ENCODE measurements at regions of chr2 and their contacts with region 1.

Region 1: GRCh38 chr2:70115646-70116442 is 28.6 kb downstream of the PCBP1 start:
- DNase-seq: no peak
- ATAC-seq: peak; percentile 78
- H3K4me3 ChIP-seq: peak overlapping the region; percentile 30; the same call in 1 of the 2 replicates
- H3K27ac ChIP-seq: peak overlapping the region; percentile 88
- H3K4me1 ChIP-seq: peaks cover 51% of the 10 kb centered on the region
- H3K27me3 ChIP-seq: no peaks in the 10 kb centered on the region
- CTCF ChIP-seq: peak in 1 of 3 experiments; percentile 27; a peak in 2 of 6 replicates
- EP300 ChIP-seq: 0 out of 4 replicates have a peak, but pooled peaks of 1 of the 2 experiments have one; percentile 34
- POLR2A ChIP-seq: no peak
- RAD21 ChIP-seq: no peak

Region 2: GRCh38 chr2:70094978-70095719 is 20.7 kb before region 1 on chr2:
- CTCF ChIA-PET with region 1: interaction called, 25 read pairs
- POLR2A ChIA-PET with region 1: interaction called, 187 read pairs
- RAD21 ChIA-PET with region 1: interaction called, 31 read pairs
- SMC1A ChIA-PET with region 1: interaction called, 28 read pairs
- in situ Hi-C with region 1: no loop called
- intact Hi-C with region 1: no loop called
- DNase-seq: no peak
- ATAC-seq: peak; percentile 90
- H3K4me3 ChIP-seq: 0 out of 2 replicates have a peak overlapping the region, but pooled peaks have one; percentile 20
- H3K27ac ChIP-seq: peak overlapping the region; percentile 89
- H3K4me1 ChIP-seq: peaks cover 17% of the 10 kb centered on the region
- H3K27me3 ChIP-seq: no peaks in the 10 kb centered on the region
- CTCF ChIP-seq: no peak
- EP300 ChIP-seq: no peak
- POLR2A ChIP-seq: peak; percentile 51; the same call in 1 of the 2 replicates
- RAD21 ChIP-seq: no peak; the same call in 1 of the 2 replicates

Region 3: GRCh38 chr2:70104231-70105111 is 11.4 kb before region 1 on chr2:
- CTCF ChIA-PET with region 1: interaction called, 40 read pairs
- POLR2A ChIA-PET with region 1: interaction called, 280 read pairs
- RAD21 ChIA-PET with region 1: interaction called, 234 read pairs
- SMC1A ChIA-PET with region 1: interaction called, 181 read pairs
- in situ Hi-C with region 1: no loop called
- intact Hi-C with region 1: no loop called
- DNase-seq: no peak
- ATAC-seq: peak; percentile 17; the same call in 2 of the 3 replicates
- H3K4me3 ChIP-seq: peak overlapping the region; percentile 53
- H3K27ac ChIP-seq: peak overlapping the region; percentile 97
- H3K4me1 ChIP-seq: peaks cover 38% of the 10 kb centered on the region
- H3K27me3 ChIP-seq: no peaks in the 10 kb centered on the region
- CTCF ChIP-seq: no peak
- EP300 ChIP-seq: no peak
- POLR2A ChIP-seq: no peak
- RAD21 ChIP-seq: 0 out of 2 replicates have a peak, but pooled peaks have one; percentile 3

Region 4: GRCh38 chr2:70132244-70133126 is 16.6 kb after region 1 on chr2:
- CTCF ChIA-PET with region 1: interaction called, 54 read pairs
- POLR2A ChIA-PET with region 1: interaction called, 280 read pairs
- RAD21 ChIA-PET with region 1: interaction called, 234 read pairs
- SMC1A ChIA-PET with region 1: interaction called, 311 read pairs
- in situ Hi-C with region 1: no loop called
- intact Hi-C with region 1: loop called (anchors 2 kb)
- DNase-seq: no peak
- ATAC-seq: peak; percentile 63
- H3K4me3 ChIP-seq: peak overlapping the region; percentile 67
- H3K27ac ChIP-seq: peak overlapping the region; percentile 99
- H3K4me1 ChIP-seq: peaks cover 49% of the 10 kb centered on the region
- H3K27me3 ChIP-seq: no peaks in the 10 kb centered on the region
- CTCF ChIP-seq: no peak
- EP300 ChIP-seq: no peak
- POLR2A ChIP-seq: peak; percentile 73
- RAD21 ChIP-seq: no peak

Region 5: GRCh38 chr2:70137519-70137918 is 21.7 kb after region 1 on chr2:
- CTCF ChIA-PET with region 1: interaction called, 54 read pairs
- POLR2A ChIA-PET with region 1: interaction called, 263 read pairs
- RAD21 ChIA-PET with region 1: interaction called, 105 read pairs
- SMC1A ChIA-PET with region 1: interaction called, 311 read pairs
- in situ Hi-C with region 1: no loop called
- intact Hi-C with region 1: loop called (anchors 2 kb)
- DNase-seq: no peak
- ATAC-seq: no peak
- H3K4me3 ChIP-seq: no peak overlapping the region
- H3K27ac ChIP-seq: no peak overlapping the region
- H3K4me1 ChIP-seq: peaks cover 48% of the 10 kb centered on the region
- H3K27me3 ChIP-seq: no peaks in the 10 kb centered on the region
- CTCF ChIP-seq: no peak
- EP300 ChIP-seq: no peak
- POLR2A ChIP-seq: no peak
- RAD21 ChIP-seq: no peak

Measured in GM12878 (cell line).